ENCODE measurements at regions of chr11 and their contacts with region 1.

Region 1: GRCh38 chr11:128302425-128303186 is 284.8 kb downstream of the ETS1 start:
- DNase-seq: peak; percentile 24 to 94 (median 78)
- ATAC-seq: peak; percentile 78 to 88
- H3K4me3 Mint-ChIP-seq: peak overlapping the region; percentile 85 to 95 (median 91)
- H3K27ac Mint-ChIP-seq: peak overlapping the region; percentile 97 to 100 (median 99)
- H3K4me1 Mint-ChIP-seq: peaks cover 48 to 95% (median 84%) of the 10 kb centered on the region in 4 donors
- H3K27me3 Mint-ChIP-seq: no peaks in the 10 kb centered on the region

Region 2: DNA sequence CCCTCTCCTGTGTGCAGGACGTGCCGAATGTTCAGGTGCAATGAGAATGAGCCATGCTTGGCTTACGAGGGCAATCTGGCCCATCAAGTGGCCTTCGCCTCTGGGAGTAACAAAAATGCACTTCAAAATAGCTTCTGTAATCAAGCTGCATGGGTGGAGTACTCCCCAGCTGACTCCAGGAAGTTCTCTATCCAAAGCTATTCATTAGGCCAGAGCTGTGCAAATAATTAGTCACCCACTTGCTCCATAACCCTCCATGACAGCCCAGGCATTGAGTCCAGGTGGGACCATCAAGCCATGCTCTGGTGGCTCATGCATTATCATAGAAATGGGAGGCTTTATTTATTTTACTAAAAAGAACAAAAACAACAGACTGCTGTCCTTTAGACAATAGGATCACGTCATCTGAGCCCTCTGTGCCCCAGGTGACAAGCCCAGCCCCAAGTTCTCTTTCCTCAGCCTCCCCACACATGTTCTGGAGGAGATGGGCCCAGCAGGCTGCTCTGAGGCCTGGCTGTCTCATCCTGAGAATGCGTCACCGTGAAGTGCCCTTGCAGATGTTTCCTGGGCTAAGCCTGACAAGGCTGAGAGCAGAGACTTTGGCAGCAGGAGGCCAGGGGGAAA is 40.0 kb after region 1 on chr11:
- POLR2A ChIA-PET with region 1: interaction called, 24 read pairs
- DNase-seq: peak in 5 of 10 donors; percentile 12 to 64 (median 32)
- ATAC-seq: peak; percentile 17 to 32
- H3K4me3 Mint-ChIP-seq: peak overlapping the region in 8 of 10 donors; percentile 74 to 90 (median 84)
- H3K27ac Mint-ChIP-seq: peak overlapping the region; percentile 97 to 100 (median 98)
- H3K4me1 Mint-ChIP-seq: peaks cover 31 to 89% (median 75%) of the 10 kb centered on the region in 4 donors
- H3K27me3 Mint-ChIP-seq: no peaks in the 10 kb centered on the region

Region 3: DNA sequence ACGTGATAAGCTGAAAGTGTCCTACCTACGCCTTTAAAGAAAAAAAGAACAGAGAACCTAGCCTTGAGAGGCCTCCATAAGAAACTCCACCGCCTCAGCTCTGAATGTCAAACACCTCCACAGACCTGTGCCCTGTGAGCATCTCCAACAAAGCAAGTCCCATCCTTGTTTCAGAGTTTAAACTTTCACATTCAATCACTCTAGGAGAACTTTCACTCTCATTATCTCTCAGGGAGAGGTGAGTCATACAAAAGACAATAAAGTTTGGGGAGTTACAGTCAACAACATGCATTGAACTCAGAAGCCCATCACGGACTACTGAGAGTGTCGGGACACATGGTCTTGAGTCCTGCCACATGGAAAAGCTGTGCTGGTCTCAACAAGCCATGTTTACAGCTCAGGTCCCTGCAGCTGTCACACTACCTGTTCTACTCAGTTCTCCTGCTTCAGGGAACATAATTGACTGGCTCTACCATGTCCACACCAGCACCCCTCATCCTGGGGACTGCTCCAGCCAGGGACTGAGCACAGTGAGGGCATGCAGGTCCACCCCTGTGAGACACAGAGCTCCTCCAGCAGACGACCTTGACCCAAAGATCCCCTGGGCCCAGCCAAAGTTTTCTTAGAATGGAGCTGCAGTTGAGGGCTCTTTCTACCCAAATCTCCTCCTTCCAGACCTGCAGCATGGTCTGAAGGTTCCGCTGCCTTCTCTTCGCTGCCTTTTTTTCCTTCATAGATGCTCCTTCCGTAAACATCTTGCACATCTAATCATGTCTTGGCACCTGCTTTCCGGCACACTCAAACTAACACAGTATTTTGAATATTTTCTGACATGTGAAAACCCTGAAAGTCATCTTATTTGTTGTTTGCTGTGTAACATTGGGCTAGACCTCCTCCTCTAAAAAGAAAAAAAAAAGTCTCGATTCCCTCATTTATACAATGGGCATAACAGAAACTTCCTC is 169.8 kb after region 1 on chr11:
- POLR2A ChIA-PET with region 1: interaction called, 252 read pairs
- DNase-seq: peak in 6 of 10 donors; percentile 26 to 56 (median 50)
- ATAC-seq: peak; percentile 2 to 33
- H3K4me3 Mint-ChIP-seq: peak overlapping the region; percentile 75 to 93 (median 88)
- H3K27ac Mint-ChIP-seq: peak overlapping the region; percentile 93 to 99 (median 98)
- H3K4me1 Mint-ChIP-seq: peaks cover 67 to 100% (median 96%) of the 10 kb centered on the region in 4 donors
- H3K27me3 Mint-ChIP-seq: no peaks in the 10 kb centered on the region

Region 4: DNA sequence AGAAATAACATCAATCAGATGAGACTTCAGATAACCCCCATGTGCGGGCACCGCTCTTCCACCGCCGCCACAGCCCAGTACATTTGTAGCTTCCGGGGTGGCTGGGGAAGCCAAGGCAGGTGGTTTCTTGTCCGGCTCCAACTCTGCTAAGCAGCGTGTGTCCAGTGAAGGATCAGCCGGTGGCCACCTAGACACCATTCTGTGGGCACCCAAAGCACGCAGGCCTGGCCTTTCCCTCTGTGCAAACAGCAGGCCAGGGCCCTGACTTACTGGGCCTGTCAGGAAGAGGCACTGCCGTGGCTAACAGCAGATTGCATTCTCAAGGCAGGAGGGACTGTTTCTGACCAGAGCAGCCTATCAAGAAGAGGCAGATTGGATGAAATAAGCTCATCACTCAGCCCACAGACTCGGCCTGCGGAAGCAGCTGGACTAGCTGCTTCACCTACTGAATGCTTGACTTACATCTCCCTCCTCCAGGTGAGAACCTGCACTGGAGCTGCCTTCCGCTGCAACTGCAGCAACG is 209.9 kb after region 1 on chr11:
- POLR2A ChIA-PET with region 1: interaction called, 38 read pairs
- DNase-seq: peak in 2 of 10 donors; percentile 52 to 67
- ATAC-seq: peak; percentile 14 to 27
- H3K4me3 Mint-ChIP-seq: peak overlapping the region; percentile 89 to 99 (median 98)
- H3K27ac Mint-ChIP-seq: peak overlapping the region; percentile 93 to 98 (median 96)
- H3K4me1 Mint-ChIP-seq: peaks cover 53 to 99% (median 89%) of the 10 kb centered on the region in 4 donors
- H3K27me3 Mint-ChIP-seq: no peaks in the 10 kb centered on the region